Heart right ventricle (tissue), 16 donors: ENCODE measurements at regions of chr13 and their contacts with region 1.

Region 1: DNA sequence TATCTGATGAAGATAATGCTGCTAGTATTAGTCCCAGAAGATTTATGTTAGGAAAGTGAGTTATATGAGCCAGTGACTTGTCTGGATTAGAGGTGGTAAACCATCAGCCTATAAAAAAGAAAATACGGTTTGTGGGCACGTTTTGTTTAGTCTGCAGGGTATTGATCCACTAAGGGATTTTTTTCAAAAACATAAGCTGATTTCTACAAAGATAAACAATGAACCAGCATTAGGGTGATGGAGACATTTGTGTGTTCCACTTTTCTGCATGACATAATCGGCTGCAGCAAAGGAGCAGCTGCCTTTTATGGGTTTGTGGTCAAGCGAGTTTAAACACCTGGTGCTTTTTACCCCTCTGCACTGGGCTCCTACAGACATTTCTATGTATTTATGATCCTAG is 836.4 kb upstream of the GPC6 start:
- DNase-seq: no peak
- ATAC-seq: no peak
- H3K4me3 ChIP-seq: no peak overlapping the region
- H3K27ac ChIP-seq: no peak overlapping the region
- H3K4me1 ChIP-seq: no peaks in the 10 kb centered on the region
- H3K27me3 ChIP-seq: no peaks in the 10 kb centered on the region
- CTCF ChIP-seq: no peak

Region 2: GRCh38 chr13:93377196-93377595 is 987.0 kb after region 1 on chr13:
- intact Hi-C with region 1: loop called in 1 of 10 experiments (anchors 5 kb)
- DNase-seq: no peak
- ATAC-seq: no peak
- H3K4me3 ChIP-seq: no peak overlapping the region
- H3K27ac ChIP-seq: no peak overlapping the region
- H3K4me1 ChIP-seq: no peaks in the 10 kb centered on the region
- H3K27me3 ChIP-seq: no peaks in the 10 kb centered on the region
- CTCF ChIP-seq: no peak